Vagina (tissue), 2 donors: ENCODE measurements at regions of chr3 and their contacts with region 1.

Region 1: DNA sequence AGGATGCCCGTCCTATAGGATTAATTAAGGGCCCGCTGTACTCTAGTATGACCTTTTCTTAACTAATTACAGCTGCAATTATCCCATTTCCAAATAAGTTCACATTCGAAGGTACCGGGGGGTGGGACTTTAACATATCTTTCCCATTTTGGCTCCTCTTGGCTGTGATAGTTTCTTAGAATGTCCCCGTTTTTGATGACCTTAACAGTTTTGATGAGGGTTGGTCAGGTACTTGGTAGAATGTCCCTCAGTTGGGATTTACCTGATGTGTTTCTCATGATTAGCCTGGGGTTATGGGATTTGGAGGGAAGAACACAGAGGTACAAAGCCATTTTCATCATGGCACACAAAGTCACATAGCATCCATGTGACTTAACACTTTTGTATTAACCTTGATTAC is 18.2 kb downstream of the RTP1 start:
- DNase-seq: no peak
- H3K4me3 ChIP-seq: no peak overlapping the region
- H3K27ac ChIP-seq: no peak overlapping the region
- H3K4me1 ChIP-seq: peaks cover 19% of the 10 kb centered on the region
- H3K27me3 ChIP-seq: no peaks in the 10 kb centered on the region
- CTCF ChIP-seq: no peak
- POLR2A ChIP-seq: no peak

Region 2: GRCh38 chr3:187679638-187680396 is 464.4 kb after region 1 on chr3:
- intact Hi-C with region 1: loop called (anchors 5 kb)
- DNase-seq: no peak
- H3K4me3 ChIP-seq: no peak overlapping the region
- H3K27ac ChIP-seq: no peak overlapping the region
- H3K4me1 ChIP-seq: no peaks in the 10 kb centered on the region
- H3K27me3 ChIP-seq: no peaks in the 10 kb centered on the region
- CTCF ChIP-seq: peak; percentile 74 to 92 (median 83)
- POLR2A ChIP-seq: no peak

Region 3: DNA sequence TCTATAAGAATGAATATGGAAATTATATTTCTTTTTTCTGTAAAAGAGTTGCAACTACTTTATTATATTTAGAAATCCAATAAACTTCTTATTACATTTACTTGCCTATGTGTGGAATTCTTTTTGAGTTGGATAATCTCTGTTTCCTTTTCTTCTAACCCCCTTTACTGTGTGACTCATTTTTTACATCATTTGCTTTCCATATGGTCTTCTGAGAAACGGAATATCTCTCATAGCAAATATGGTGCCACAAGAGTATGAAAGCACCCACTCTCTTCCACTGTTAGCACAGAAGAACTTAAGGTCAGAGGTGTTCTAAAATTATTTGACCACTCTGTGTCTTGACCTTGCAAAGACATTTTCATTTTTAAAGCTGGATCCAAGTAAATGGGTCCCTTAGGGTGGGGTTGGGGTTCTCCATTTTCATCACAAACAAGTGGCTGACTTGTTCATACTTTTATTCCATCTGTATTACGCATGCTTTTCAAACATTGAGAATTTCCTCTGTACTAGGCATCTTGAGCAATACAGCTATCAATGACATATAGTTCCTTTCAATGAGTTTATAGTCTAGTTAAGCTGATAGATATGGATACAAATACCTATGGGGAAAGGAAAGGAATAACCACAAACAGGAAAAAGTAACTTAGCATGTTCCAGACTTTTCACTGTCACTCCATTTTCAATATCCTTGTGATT is 1675.3 kb after region 1 on chr3:
- intact Hi-C with region 1: no loop called
- DNase-seq: no peak
- H3K4me3 ChIP-seq: no peak overlapping the region
- H3K27ac ChIP-seq: no peak overlapping the region
- H3K4me1 ChIP-seq: no peaks in the 10 kb centered on the region
- H3K27me3 ChIP-seq: no peaks in the 10 kb centered on the region
- CTCF ChIP-seq: no peak
- POLR2A ChIP-seq: no peak